ENCODE measurements at regions of chr12 and their contacts with region 1.

Region 1: GRCh38 chr12:52327052-52327829 is 6.0 kb upstream of the KRT83 start:
- DNase-seq: peak; percentile 87
- H3K4me3 ChIP-seq: no peak overlapping the region
- H3K27ac ChIP-seq: no peak overlapping the region
- H3K4me1 ChIP-seq: no peaks in the 10 kb centered on the region
- H3K27me3 ChIP-seq: no peaks in the 10 kb centered on the region
- CTCF ChIP-seq: peak; percentile 55 to 74 (median 70)
- EP300 ChIP-seq: no peak
- POLR2A ChIP-seq: no peak

Region 2: GRCh38 chr12:52213512-52214420 is 113.5 kb before region 1 on chr12:
- intact Hi-C with region 1: loop called (anchors 5 kb)
- DNase-seq: peak; percentile 80
- H3K4me3 ChIP-seq: no peak overlapping the region
- H3K27ac ChIP-seq: no peak overlapping the region
- H3K4me1 ChIP-seq: no peaks in the 10 kb centered on the region
- H3K27me3 ChIP-seq: peaks cover 0 to 2% (median 0%) of the 10 kb centered on the region in 3 donors
- CTCF ChIP-seq: peak; percentile 79 to 97 (median 90)
- EP300 ChIP-seq: no peak
- POLR2A ChIP-seq: no peak